Motor neuron (in vitro differentiated cells): ENCODE measurements at regions of chr16 and their contacts with region 1.

Region 1: GRCh38 chr16:48244080-48244862 is at the start of gene LONP2:
- ATAC-seq: peak; percentile 95 to 98 (median 98)
- H3K4me3 ChIP-seq: peak within 1 kb of the TSS; percentile 51 to 96 (median 57)
- H3K27ac ChIP-seq: peak within 1 kb of the TSS; percentile 62 to 91
- H3K4me1 ChIP-seq: peaks cover 12 to 13% of the 10 kb centered on the region in 2 donors
- total RNA-seq, gene LONP2: 25.3 to 70.5 (median 42.5) TPM

Region 2: GRCh38 chr16:46428125-46429061 is 1815.9 kb before region 1 on chr16:
- in situ Hi-C with region 1: no loop called
- ATAC-seq: no peak
- H3K4me3 ChIP-seq: no peak overlapping the region
- H3K27ac ChIP-seq: no peak overlapping the region
- H3K4me1 ChIP-seq: no peaks in the 10 kb centered on the region

Region 3: DNA sequence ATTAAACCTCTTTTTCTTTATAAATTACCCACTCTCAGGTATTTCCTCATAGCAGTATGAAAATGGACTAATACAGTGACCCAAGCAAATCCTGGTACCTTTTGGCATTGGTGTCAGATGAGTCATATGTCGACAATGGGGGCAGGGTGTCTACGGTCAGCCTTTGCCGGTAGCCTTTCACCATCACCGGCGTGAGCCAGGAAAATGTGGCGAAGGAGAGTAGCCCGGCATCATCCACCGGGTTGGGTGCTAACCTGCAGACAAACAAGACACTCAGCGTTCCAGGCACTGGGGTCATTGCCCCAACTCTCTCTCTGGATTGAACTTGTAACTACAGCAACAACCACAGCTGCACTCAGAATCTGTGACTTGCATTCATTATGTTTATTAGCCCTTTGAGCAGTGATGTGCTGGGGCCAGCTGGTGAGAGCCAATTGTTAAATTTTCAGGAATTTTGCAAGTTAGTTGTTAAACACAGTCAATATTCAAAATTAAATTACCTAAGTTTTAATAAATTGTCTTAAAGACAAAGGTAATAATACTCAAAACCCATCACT is 100.4 kb before region 1 on chr16:
- in situ Hi-C with region 1: no loop called
- ATAC-seq: peak in 6 of 8 experiments; percentile 31 to 99 (median 88)
- H3K4me3 ChIP-seq: no peak overlapping the region
- H3K27ac ChIP-seq: no peak overlapping the region
- H3K4me1 ChIP-seq: peaks cover 0 to 10% of the 10 kb centered on the region in 2 donors

Region 4: DNA sequence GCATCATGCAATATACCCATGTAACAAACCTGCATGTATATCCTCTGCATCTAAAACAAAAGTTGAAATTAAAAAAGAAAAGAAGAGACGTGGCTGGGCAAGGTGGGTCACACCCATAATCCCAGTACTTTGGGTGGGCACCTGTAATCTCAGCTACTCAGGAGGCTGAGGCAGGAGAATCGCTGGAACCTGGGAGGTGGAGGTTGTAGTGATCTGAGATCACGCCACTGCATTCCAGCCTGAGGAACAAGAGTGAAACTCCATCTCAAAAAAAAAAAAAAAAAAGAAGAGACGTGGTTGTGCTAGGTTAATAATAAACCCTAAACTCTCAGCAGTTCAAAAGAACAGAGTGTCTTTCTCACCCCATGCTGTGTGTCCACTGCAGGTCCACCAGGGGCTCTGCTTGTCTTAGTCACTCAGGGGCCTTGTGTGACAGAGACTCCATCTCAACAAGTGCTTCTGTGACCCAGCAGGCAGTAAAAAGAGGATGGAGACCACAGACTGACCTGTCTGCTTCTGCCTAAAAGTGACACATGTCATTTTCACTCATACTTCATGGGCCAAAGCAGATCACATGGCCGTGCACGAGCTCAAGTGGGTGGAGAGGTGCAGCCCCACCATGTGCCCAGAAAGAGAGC is 388.0 kb after region 1 on chr16:
- in situ Hi-C with region 1: loop called in 2 of 9 experiments (anchors 25 kb)
- ATAC-seq: no peak
- H3K4me3 ChIP-seq: no peak overlapping the region
- H3K27ac ChIP-seq: no peak overlapping the region
- H3K4me1 ChIP-seq: peaks cover 0 to 4% of the 10 kb centered on the region in 2 donors